Panc1 (cell line): ENCODE measurements at regions of chr9 and their contacts with region 1.

Region 1: GRCh38 chr9:114405294-114406034 is 17.7 kb upstream of the AKNA start:
- DNase-seq: no peak
- ATAC-seq: peak; percentile 96
- H3K4me3 ChIP-seq: no peak overlapping the region
- H3K27ac ChIP-seq: no peak overlapping the region
- H3K4me1 ChIP-seq: no peaks in the 10 kb centered on the region
- H3K27me3 ChIP-seq: no peaks in the 10 kb centered on the region
- CTCF ChIP-seq: peak; percentile 78

Region 2: GRCh38 chr9:114487607-114488300 is 82.3 kb after region 1 on chr9:
- CTCF ChIA-PET with region 1: no interaction called
- POLR2A ChIA-PET with region 1: no interaction called
- in situ Hi-C with region 1: no loop called
- intact Hi-C with region 1: loop called (anchors 5 kb)
- DNase-seq: peak; percentile 54
- ATAC-seq: peak; percentile 98
- H3K4me3 ChIP-seq: no peak overlapping the region
- H3K27ac ChIP-seq: no peak overlapping the region
- H3K4me1 ChIP-seq: no peaks in the 10 kb centered on the region
- H3K27me3 ChIP-seq: no peaks in the 10 kb centered on the region
- CTCF ChIP-seq: peak; percentile 85

Region 3: DNA sequence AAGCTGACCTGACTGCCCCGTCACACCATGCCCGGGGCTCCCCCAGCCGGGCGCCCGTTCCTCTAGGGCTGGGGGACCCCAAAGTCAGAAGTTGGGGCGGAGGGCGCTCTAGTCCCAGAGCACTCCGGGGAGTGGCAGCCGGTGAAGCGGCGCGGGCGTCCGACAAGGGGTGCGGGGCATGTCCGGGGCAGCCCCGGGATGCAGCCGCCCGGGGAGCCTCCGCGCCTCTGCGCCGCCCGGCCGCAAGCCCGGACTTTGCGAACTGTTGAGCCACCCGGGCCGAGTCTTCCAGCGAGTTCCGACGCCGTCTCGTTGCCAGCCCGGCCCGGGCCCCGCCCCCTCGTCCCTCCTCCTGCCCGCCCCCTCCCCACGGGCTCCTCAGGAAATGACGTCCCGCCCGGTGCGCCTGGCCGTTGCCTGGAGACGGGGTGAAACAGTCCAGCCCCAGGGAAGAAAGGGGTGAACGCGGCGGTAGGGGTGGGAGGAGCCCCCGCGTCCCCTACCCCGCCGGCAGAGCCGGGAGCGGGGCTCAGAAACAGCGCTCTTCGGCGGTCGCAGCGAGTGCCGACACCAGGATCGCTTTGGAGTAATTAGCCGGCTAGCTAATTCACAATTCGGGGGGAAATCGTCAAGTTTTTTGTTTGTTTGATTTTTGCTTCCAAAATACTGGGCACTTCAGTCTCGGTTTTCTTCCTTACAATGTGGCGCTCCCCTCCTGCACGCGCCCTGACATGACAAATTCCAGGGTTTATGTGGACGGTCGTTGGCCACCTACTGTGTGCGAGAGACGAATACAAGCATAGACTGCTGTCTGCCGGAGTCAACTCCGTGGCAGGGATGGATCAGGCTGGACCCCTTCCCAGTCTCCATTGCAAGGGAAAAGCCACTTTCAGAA is 100.0 kb after region 1 on chr9 and contains the start of gene WHRN:
- CTCF ChIA-PET with region 1: interaction called, 6 read pairs
- POLR2A ChIA-PET with region 1: interaction called, 10 read pairs
- in situ Hi-C with region 1: no loop called
- intact Hi-C with region 1: no loop called
- DNase-seq: no peak
- ATAC-seq: peak; percentile 83
- H3K4me3 ChIP-seq: peak within 1 kb of the TSS; percentile 65 to 86
- H3K27ac ChIP-seq: peak within 1 kb of the TSS; percentile 90
- H3K4me1 ChIP-seq: peaks cover 21% of the 10 kb centered on the region
- H3K27me3 ChIP-seq: no peaks in the 10 kb centered on the region
- CTCF ChIP-seq: no peak
- total RNA-seq, gene WHRN: 18.0 TPM

Region 4: DNA sequence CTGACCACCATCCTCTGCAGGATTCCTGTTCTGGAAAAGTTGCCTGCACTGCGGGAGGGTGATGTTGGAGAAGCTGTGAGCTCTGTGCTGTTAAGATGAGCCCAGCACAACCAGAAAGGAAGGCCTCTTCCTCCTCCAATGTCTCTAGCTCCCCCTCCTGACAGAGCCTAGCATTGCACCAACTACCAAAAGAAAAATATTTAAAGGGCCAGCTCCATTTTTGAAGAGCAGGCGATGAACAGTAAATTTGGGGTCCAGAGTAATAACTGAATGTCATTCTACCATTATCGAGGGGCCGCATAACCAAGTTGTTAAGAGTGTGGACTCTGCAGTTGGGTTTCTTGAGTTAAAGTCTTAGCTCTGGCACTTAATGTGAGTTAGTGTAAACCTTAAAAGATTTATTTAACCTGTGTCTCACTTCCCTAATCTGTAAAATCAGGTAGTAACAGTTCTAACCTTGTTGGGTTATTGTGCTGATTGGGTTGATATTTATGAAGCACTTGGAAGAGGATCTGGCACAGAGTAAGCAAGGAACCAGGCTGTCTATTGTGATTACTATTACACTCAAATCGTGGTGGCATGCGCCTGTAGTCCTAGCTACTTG is 248.2 kb after region 1 on chr9:
- CTCF ChIA-PET with region 1: interaction called, 15 read pairs
- POLR2A ChIA-PET with region 1: no interaction called
- in situ Hi-C with region 1: no loop called
- intact Hi-C with region 1: loop called (anchors 2 kb)
- DNase-seq: peak; percentile 54
- ATAC-seq: peak; percentile 76
- H3K4me3 ChIP-seq: no peak overlapping the region
- H3K27ac ChIP-seq: no peak overlapping the region
- H3K4me1 ChIP-seq: no peaks in the 10 kb centered on the region
- H3K27me3 ChIP-seq: no peaks in the 10 kb centered on the region
- CTCF ChIP-seq: peak; percentile 88

Region 5: GRCh38 chr9:115013998-115014397 is 608.5 kb after region 1 on chr9:
- CTCF ChIA-PET with region 1: interaction called, 5 read pairs
- POLR2A ChIA-PET with region 1: no interaction called
- in situ Hi-C with region 1: no loop called
- intact Hi-C with region 1: loop called (anchors 5 kb)
- DNase-seq: no peak
- ATAC-seq: peak; percentile 85
- H3K4me3 ChIP-seq: no peak overlapping the region
- H3K27ac ChIP-seq: no peak overlapping the region
- H3K4me1 ChIP-seq: no peaks in the 10 kb centered on the region
- H3K27me3 ChIP-seq: no peaks in the 10 kb centered on the region
- CTCF ChIP-seq: peak; percentile 72